ENCODE measurements at regions of chr12 and their contacts with region 1.

Region 1: GRCh38 chr12:27305673-27306456 is 26.8 kb upstream of the BMAL2 start:
- DNase-seq: no peak
- H3K4me3 Mint-ChIP-seq: no peak overlapping the region
- H3K27ac Mint-ChIP-seq: no peak overlapping the region
- H3K4me1 Mint-ChIP-seq: peaks cover 14% of the 10 kb centered on the region
- H3K27me3 Mint-ChIP-seq: no peaks in the 10 kb centered on the region

Region 2: DNA sequence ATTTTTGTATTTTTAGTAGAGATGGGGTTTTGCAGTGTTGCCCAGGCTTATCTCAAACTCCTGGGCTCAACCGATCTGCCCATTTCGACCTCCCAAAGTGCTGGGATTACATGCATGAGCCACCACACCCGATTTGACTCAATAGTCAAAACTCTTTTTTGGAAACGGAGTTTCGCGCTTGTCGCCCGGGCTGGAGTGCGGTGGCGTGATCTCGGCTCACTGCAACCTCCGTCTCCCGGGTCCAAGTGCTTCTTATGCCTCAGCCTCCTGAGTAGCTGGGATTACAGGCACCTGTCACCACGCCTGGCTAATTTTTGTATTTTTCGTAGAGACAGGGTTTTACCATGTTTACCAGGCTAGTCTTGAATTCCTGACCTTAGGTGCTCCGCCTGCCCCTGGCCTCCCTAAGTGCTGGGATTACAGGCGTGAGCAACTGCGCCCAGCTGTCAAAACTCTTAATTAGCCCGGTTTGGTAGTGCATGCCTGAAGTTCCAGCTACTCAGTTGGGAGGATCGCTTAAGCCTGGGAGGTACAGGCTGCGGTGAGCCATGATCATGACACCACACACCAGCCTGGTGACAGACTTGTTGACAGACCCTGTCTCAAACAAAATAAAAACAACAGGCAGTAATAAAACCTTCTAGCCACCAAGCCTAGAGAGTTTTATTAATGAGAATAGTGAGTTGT is 271.1 kb before region 1 on chr12:
- intact Hi-C with region 1: loop called (anchors 1 kb)
- DNase-seq: no peak
- H3K4me3 Mint-ChIP-seq: no peak overlapping the region
- H3K27ac Mint-ChIP-seq: no peak overlapping the region
- H3K4me1 Mint-ChIP-seq: no peaks in the 10 kb centered on the region
- H3K27me3 Mint-ChIP-seq: no peaks in the 10 kb centered on the region

Region 3: GRCh38 chr12:27123642-27124041 is 182.2 kb before region 1 on chr12:
- intact Hi-C with region 1: loop called (anchors 5 kb)
- DNase-seq: no peak
- H3K4me3 Mint-ChIP-seq: no peak overlapping the region
- H3K27ac Mint-ChIP-seq: no peak overlapping the region
- H3K4me1 Mint-ChIP-seq: no peaks in the 10 kb centered on the region
- H3K27me3 Mint-ChIP-seq: peaks cover 7% of the 10 kb centered on the region

Region 4: DNA sequence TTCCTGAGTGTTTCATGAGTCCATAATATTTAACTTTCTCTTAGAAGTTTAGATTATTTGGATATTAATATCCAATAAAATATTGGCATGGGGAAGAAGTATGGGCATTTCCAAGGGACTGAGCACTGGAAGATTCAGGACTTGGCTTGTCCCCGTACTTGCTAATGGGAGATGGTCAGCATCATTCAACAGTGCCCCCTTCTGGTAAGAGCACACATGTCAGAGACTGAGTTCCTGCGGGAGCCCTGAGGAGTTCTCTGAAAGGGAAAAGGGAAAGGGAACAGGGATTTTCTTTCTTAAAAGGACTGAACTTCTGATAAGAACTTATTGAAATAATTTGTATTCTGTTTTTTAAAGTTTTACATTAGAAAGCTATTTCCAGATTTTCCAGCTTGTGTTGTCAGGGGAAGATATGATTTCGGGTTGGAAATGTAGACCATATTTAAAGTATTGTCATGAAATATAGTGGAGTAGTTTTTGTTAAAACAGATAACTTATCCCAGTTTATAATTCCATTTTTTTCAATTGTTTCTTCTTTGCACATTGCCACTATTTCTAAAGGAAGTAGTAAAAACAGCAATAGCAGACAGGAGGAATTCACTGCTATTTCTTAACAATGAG is 163.7 kb before region 1 on chr12:
- intact Hi-C with region 1: loop called (anchors 1 kb)
- DNase-seq: peak; percentile 16
- H3K4me3 Mint-ChIP-seq: no peak overlapping the region
- H3K27ac Mint-ChIP-seq: no peak overlapping the region
- H3K4me1 Mint-ChIP-seq: peaks cover 31% of the 10 kb centered on the region
- H3K27me3 Mint-ChIP-seq: no peaks in the 10 kb centered on the region

Measured in activated T-helper 1 cell treated with anti-CD3 and anti-CD28 coated beads, Interleukin-12 subunit alpha, Interleukin-12 subunit beta, Interleukin-2, Interleukin-4 antibody, amounts not matched to agents 30 ng/mL and 10 ng/mL and 1 ng/mL, durations not matched to agents 14 hours and 24 hours and 36 hours (primary cell).